ENCODE measurements at regions of chr19 and their contacts with region 1.

Region 1: DNA sequence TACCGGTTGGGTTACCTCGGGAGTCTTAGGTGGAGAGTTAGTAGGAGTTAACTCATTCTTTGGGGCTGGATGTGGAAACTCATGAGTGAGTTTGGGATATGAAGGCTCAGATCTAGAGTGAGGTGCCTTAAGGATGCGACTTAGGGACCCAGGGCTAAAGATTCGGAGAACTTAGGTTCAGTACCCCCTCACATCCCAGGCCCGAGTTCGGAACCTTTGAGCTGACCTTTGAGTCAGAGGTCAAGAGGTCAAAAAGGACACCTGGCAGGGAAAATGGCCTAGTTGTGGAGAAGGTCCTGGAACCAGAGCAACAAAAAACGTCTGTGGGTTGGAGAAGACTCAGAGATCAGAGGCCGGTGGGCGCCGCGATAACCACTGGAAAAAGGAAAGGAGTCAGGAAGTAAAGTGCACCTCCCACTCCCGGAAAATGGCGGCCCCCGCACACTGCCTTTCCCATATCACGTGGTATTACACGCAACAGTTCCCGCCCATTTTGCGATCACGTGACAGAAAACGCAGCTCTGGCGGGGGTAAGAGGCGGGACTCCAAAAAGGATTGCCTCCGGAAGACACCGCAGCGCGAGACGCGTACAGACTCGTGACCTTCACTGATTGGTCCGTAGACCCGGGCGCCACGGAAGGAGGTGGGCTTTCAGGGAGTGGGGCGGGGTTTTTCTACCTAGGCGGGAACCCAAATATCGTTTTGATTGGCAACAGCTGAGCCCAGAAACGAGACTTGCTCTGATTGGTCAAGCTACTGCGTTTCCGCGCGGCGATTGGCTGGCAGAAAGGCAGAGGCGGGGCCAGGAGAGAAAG is at the start of gene ACTMAP:
- DNase-seq: peak; percentile 98 to 100 (median 99)
- ATAC-seq: peak; percentile 87
- H3K4me3 ChIP-seq: peak within 1 kb of the TSS; percentile 75 to 87
- H3K4me3 Mint-ChIP-seq: peak within 1 kb of the TSS; percentile 93
- H3K27ac ChIP-seq: peak within 1 kb of the TSS; percentile 91 to 95
- H3K27ac Mint-ChIP-seq: peak within 1 kb of the TSS; percentile 98
- H3K4me1 ChIP-seq: peaks cover 36% of the 10 kb centered on the region
- H3K4me1 Mint-ChIP-seq: peaks cover 38% of the 10 kb centered on the region
- H3K27me3 ChIP-seq: no peaks in the 10 kb centered on the region
- H3K27me3 Mint-ChIP-seq: no peaks in the 10 kb centered on the region
- CTCF ChIP-seq: no peak
- total RNA-seq, gene ACTMAP: 3.5 to 3.8 TPM

Region 2: GRCh38 chr19:39833464-39834286 is 916.6 kb before region 1 on chr19 and contains the start of gene DYRK1B:
- CTCF ChIA-PET with region 1: no interaction called
- POLR2A ChIA-PET with region 1: no interaction called
- intact Hi-C with region 1: loop called in 1 of 2 experiments (anchors 2 kb)
- DNase-seq: peak; percentile 97 to 99 (median 98)
- ATAC-seq: peak; percentile 84
- H3K4me3 ChIP-seq: peak within 1 kb of the TSS; percentile 93 to 99
- H3K4me3 Mint-ChIP-seq: peak within 1 kb of the TSS; percentile 75
- H3K27ac ChIP-seq: peak within 1 kb of the TSS; percentile 96 to 99
- H3K27ac Mint-ChIP-seq: peak within 1 kb of the TSS; percentile 90
- H3K4me1 ChIP-seq: peaks cover 23% of the 10 kb centered on the region
- H3K4me1 Mint-ChIP-seq: peaks cover 28% of the 10 kb centered on the region
- H3K27me3 ChIP-seq: no peaks in the 10 kb centered on the region
- H3K27me3 Mint-ChIP-seq: no peaks in the 10 kb centered on the region
- CTCF ChIP-seq: no peak
- total RNA-seq, gene DYRK1B: 19.0 to 22.6 TPM

Region 3: DNA sequence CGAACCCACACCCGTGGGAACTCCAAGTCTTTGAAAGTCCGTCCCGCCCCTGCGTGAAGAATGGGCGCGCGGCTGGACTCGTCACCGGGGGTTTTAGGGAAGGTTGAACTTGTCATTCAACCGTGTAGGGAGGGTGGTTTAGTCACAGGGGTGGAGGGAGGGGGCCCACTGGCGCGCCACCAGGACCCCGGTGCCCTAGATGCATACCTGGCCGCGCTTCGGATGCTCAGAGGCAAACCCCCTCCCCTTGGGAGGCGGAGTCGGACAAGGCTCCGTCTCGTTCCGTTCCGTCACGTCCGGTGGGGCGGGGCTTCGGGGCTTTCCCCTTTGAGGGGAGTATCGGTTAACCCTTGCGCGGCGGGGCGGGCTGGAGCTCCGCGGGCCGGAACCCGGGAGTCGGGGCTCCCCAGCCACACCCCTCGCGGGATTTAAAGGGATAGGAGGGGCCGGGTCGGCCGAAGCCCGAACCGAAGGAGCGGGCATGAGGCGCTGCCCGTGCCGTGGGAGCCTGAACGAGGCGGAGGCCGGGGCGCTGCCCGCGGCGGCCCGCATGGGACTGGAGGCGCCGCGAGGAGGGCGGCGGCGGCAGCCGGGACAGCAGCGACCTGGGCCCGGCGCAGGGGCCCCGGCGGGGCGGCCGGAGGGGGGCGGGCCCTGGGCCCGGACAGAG is 33.5 kb before region 1 on chr19 and contains the starts of genes COQ8B and ITPKC:
- CTCF ChIA-PET with region 1: interaction called, 3 read pairs
- POLR2A ChIA-PET with region 1: interaction called, 13 read pairs
- intact Hi-C with region 1: loop called (anchors 1 kb)
- DNase-seq: peak; percentile 98 to 100 (median 100)
- ATAC-seq: peak; percentile 74
- H3K4me3 ChIP-seq: peak within 1 kb of the TSS; percentile 66 to 93
- H3K4me3 Mint-ChIP-seq: peak within 1 kb of the TSS; percentile 88
- H3K27ac ChIP-seq: peak within 1 kb of the TSS; percentile 88 to 89
- H3K27ac Mint-ChIP-seq: peak within 1 kb of the TSS; percentile 97
- H3K4me1 ChIP-seq: peaks cover 61% of the 10 kb centered on the region
- H3K4me1 Mint-ChIP-seq: peaks cover 70% of the 10 kb centered on the region
- H3K27me3 ChIP-seq: no peaks in the 10 kb centered on the region
- H3K27me3 Mint-ChIP-seq: no peaks in the 10 kb centered on the region
- CTCF ChIP-seq: no peak
- total RNA-seq, gene COQ8B: 14.0 to 14.2 TPM
- total RNA-seq, gene ITPKC: 5.9 to 6.4 TPM

Region 4: DNA sequence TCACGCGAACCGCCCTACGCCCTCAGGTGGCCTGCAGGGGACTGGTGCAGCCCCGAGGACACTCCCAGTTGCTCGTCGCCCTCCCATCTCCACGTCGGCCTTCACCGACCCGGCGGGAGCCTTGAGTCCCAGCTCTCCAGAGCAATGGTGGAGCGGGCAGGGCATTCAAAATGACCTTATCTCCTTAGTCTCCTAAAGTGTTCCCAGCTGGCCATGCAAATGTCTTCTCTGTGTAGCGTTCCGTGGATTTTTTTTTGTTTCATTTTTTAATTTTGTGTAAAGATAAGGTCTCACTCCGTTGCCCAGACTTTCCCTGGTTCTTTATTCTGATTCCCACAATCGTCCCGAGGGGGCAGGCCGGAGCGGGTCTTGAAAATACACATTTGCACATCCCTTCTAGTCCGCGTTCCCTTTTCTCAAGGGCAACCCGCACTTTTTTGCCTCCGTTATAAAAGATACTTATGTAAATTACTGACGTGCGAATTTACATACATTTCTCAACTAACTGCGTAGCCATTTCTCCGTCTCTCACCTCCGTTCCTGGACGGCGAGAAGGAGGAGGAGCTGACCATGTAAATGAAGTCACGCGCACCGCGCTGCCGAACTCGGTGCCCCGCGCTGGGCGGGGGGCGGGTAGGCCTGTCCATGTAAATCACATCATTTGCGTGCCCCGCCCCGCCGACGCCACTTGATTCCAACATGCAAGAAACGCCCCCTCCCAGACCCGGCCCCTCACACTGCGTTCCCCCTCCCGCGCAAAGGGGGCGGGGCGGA is 48.1 kb after region 1 on chr19:
- CTCF ChIA-PET with region 1: interaction called, 37 read pairs
- POLR2A ChIA-PET with region 1: interaction called, 30 read pairs
- intact Hi-C with region 1: loop called (anchors 1 kb)
- DNase-seq: peak; percentile 100
- ATAC-seq: peak; percentile 82
- H3K4me3 ChIP-seq: peak overlapping the region; percentile 60 to 91
- H3K4me3 Mint-ChIP-seq: peak overlapping the region; percentile 98
- H3K27ac ChIP-seq: peak overlapping the region; percentile 97
- H3K27ac Mint-ChIP-seq: peak overlapping the region; percentile 97
- H3K4me1 ChIP-seq: peaks cover 45% of the 10 kb centered on the region
- H3K4me1 Mint-ChIP-seq: peaks cover 50% of the 10 kb centered on the region
- H3K27me3 ChIP-seq: no peaks in the 10 kb centered on the region
- H3K27me3 Mint-ChIP-seq: no peaks in the 10 kb centered on the region
- CTCF ChIP-seq: peak; percentile 56

Region 5: DNA sequence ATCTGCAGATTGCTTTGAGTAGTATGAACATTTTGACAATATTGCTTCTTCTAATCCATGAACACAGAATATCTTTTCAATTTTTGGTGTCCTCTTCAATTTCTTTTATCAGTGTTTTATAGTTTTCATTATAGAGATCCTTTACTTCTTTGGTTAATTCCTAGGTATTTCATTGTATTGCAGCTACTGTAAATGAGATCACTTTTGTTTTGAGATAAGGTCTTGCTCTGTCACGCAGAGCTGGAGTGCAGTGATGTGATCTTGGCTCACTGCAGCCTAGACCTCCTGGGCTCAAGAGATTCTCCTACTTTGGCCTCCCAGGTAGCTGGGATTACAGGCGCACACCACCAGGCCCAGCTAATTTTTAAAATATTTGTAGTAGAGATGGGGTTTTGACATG is 121.9 kb after region 1 on chr19:
- CTCF ChIA-PET with region 1: no interaction called
- POLR2A ChIA-PET with region 1: no interaction called
- intact Hi-C with region 1: loop called in 1 of 2 experiments (anchors 2 kb)
- DNase-seq: no peak
- ATAC-seq: no peak
- H3K4me3 ChIP-seq: no peak overlapping the region
- H3K4me3 Mint-ChIP-seq: no peak overlapping the region
- H3K27ac ChIP-seq: no peak overlapping the region
- H3K27ac Mint-ChIP-seq: no peak overlapping the region
- H3K4me1 ChIP-seq: peaks cover 11% of the 10 kb centered on the region
- H3K4me1 Mint-ChIP-seq: peaks cover 14% of the 10 kb centered on the region
- H3K27me3 ChIP-seq: no peaks in the 10 kb centered on the region
- H3K27me3 Mint-ChIP-seq: peaks cover 8% of the 10 kb centered on the region
- CTCF ChIP-seq: no peak

Region 6: GRCh38 chr19:41273076-41273475 is 522.8 kb after region 1 on chr19:
- CTCF ChIA-PET with region 1: no interaction called
- POLR2A ChIA-PET with region 1: no interaction called
- intact Hi-C with region 1: no loop called
- DNase-seq: no peak
- ATAC-seq: no peak
- H3K4me3 ChIP-seq: no peak overlapping the region
- H3K4me3 Mint-ChIP-seq: no peak overlapping the region
- H3K27ac ChIP-seq: no peak overlapping the region
- H3K27ac Mint-ChIP-seq: no peak overlapping the region
- H3K4me1 ChIP-seq: no peaks in the 10 kb centered on the region
- H3K4me1 Mint-ChIP-seq: peaks cover 5% of the 10 kb centered on the region
- H3K27me3 ChIP-seq: no peaks in the 10 kb centered on the region
- H3K27me3 Mint-ChIP-seq: no peaks in the 10 kb centered on the region
- CTCF ChIP-seq: no peak